Activated B cell treated with CpG ODN at 0.5 μM for 24 hours (primary cell): ENCODE measurements at regions of chr2 and their contacts with region 1.

Region 1: GRCh38 chr2:219278655-219279516 is at the start of gene DNAJB2:
- DNase-seq: peak; percentile 99
- ATAC-seq: peak; percentile 78
- H3K4me3 Mint-ChIP-seq: peak within 1 kb of the TSS; percentile 89
- H3K27ac Mint-ChIP-seq: peak within 1 kb of the TSS; percentile 97
- H3K4me1 Mint-ChIP-seq: peaks cover 49% of the 10 kb centered on the region
- H3K27me3 Mint-ChIP-seq: no peaks in the 10 kb centered on the region
- CTCF ChIP-seq: no peak
- total RNA-seq, gene DNAJB2: 59.0 and 71.1 TPM in 2 replicates

Region 2: GRCh38 chr2:218876562-218877219 is 402.2 kb before region 1 on chr2:
- CTCF ChIA-PET with region 1: no interaction called
- POLR2A ChIA-PET with region 1: interaction called, 4 read pairs
- intact Hi-C with region 1: loop called (anchors 1 kb)
- DNase-seq: peak; percentile 58
- ATAC-seq: no peak
- H3K4me3 Mint-ChIP-seq: no peak overlapping the region
- H3K27ac Mint-ChIP-seq: no peak overlapping the region
- H3K4me1 Mint-ChIP-seq: peaks cover 55% of the 10 kb centered on the region
- H3K27me3 Mint-ChIP-seq: peaks cover 19% of the 10 kb centered on the region
- CTCF ChIP-seq: peak; percentile 65

Region 3: DNA sequence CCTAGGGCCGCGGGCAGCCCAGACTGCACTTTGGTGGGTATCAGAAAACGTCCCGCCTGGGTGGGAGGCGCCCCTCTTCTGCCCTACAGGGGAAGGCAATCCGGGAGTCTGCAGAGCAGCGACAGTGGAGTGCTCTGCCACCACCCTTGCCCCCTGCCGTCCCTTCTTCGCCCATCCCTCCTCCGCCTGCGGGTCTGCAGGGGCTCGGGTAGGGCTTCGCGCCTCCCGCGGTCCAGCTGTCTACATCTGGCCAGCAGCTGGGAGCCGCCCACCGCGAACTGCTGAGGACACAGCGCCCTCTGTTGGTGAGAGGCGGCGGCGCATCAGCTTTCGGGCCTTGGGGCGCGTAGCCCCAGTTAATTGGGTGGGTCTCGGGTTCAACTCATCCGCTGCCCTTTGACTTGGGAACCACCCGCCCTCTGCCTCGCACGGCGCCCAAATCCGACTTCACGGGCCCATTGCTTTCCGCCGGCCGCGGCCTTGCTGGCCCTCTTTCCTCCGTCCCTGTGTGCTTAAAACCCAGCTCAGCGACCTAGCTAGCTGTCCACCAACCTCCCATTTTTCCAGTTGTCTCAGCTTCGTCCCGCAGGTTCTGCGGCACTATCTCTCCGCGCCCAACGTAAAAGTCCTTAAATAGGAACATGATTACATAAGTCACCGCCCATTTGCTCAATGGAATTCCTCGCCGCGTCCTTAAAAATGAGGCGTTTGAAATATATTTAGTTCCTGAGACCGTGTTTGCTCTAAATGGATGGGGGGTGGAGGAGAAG is 380.6 kb before region 1 on chr2:
- CTCF ChIA-PET with region 1: no interaction called
- POLR2A ChIA-PET with region 1: interaction called, 7 read pairs
- intact Hi-C with region 1: loop called (anchors 1 kb)
- DNase-seq: peak; percentile 88
- ATAC-seq: peak; percentile 22
- H3K4me3 Mint-ChIP-seq: peak overlapping the region; percentile 85
- H3K27ac Mint-ChIP-seq: peak overlapping the region; percentile 84
- H3K4me1 Mint-ChIP-seq: peaks cover 47% of the 10 kb centered on the region
- H3K27me3 Mint-ChIP-seq: peaks cover 22% of the 10 kb centered on the region
- CTCF ChIP-seq: peak; percentile 97

Region 4: DNA sequence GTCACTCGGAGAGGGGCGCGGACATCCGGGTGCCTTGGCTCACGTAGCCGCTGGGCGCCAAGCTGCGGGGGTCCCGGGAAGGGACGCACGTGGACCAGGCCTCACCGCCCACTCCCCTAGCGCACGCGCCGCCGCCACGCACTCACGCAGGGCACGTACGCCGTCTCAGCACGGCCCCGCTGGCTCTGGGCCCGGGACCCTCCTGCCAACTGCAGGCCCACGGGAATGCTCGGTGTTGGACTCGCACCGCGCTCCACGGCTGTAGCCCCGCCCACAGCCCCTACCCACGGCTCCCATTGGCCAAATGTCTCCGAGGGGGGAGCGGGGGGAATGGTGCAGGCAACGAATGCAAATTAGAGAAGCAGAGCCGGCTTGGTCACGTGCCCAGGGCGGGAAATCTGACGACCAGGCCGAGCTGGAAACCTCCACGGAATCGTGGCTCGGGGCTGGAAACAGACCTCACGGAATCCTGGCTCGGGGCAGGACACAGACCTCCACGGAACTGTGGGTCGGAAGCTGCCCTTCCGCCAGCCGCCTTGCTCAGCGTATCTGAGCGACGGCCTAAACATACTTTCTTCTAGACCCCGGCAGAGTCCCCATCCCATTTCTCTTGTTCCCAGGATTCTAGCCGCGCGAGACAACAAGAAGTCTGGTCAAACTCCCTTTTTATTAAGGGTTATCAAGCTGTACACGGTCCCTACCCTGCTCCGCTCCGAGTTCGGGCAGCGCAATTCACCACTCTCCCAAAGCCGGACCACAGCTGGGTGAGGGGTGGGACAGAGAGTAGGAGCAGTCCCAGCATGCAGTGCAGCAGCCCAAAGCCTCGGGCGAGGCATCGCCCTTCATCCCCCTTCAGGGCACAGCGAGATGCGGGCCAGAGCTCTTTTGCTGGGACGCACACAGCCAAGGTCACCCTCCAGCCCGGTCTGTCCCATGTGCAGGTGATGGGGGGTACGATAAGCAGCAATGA is 59.9 kb before region 1 on chr2 and contains the start of gene ABCB6:
- CTCF ChIA-PET with region 1: interaction called, 3 read pairs
- POLR2A ChIA-PET with region 1: interaction called, 30 read pairs
- intact Hi-C with region 1: loop called (anchors 1 kb)
- DNase-seq: peak; percentile 82
- ATAC-seq: peak; percentile 95
- H3K4me3 Mint-ChIP-seq: peak within 1 kb of the TSS; percentile 81
- H3K27ac Mint-ChIP-seq: peak within 1 kb of the TSS; percentile 74
- H3K4me1 Mint-ChIP-seq: peaks cover 19% of the 10 kb centered on the region
- H3K27me3 Mint-ChIP-seq: no peaks in the 10 kb centered on the region
- CTCF ChIP-seq: no peak
- total RNA-seq, gene ABCB6: 12.1 and 16.6 TPM in 2 replicates

Region 5: GRCh38 chr2:219245148-219245898 is 33.6 kb before region 1 on chr2 and contains the starts of genes GLB1L and STK16:
- CTCF ChIA-PET with region 1: interaction called, 35 read pairs
- POLR2A ChIA-PET with region 1: interaction called, 182 read pairs
- intact Hi-C with region 1: loop called (anchors 1 kb)
- DNase-seq: peak; percentile 95
- ATAC-seq: peak; percentile 64
- H3K4me3 Mint-ChIP-seq: peak within 1 kb of the TSS; percentile 90
- H3K27ac Mint-ChIP-seq: peak within 1 kb of the TSS; percentile 98
- H3K4me1 Mint-ChIP-seq: peaks cover 57% of the 10 kb centered on the region
- H3K27me3 Mint-ChIP-seq: no peaks in the 10 kb centered on the region
- CTCF ChIP-seq: no peak
- total RNA-seq, gene GLB1L: 4.5 and 4.6 TPM in 2 replicates
- total RNA-seq, gene STK16: 31.0 and 36.5 TPM in 2 replicates

Region 6: DNA sequence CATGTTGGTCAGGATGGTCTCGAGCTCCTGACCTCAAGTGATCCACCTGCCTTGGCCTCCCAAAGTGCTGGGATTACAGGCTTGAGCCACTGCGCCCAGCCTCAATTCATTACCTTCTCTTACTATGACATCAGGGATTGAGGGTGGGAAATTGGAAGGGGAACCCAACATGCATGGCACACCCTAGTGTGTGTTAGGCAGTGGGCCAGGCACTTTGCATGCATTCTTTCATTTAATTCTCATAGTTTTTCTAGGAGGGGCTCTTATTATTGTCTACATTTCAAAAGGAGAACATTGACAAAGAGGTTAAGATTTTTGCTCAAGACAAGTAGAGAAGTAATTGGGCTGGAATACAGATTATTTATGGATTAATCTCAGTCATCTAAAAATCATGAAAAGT is 10.6 kb before region 1 on chr2:
- CTCF ChIA-PET with region 1: no interaction called
- POLR2A ChIA-PET with region 1: no interaction called
- intact Hi-C with region 1: no loop called
- DNase-seq: no peak
- ATAC-seq: no peak
- H3K4me3 Mint-ChIP-seq: no peak overlapping the region
- H3K27ac Mint-ChIP-seq: no peak overlapping the region
- H3K4me1 Mint-ChIP-seq: no peaks in the 10 kb centered on the region
- H3K27me3 Mint-ChIP-seq: no peaks in the 10 kb centered on the region
- CTCF ChIP-seq: no peak

Region 7: GRCh38 chr2:219294356-219295351 is 15.8 kb after region 1 on chr2:
- CTCF ChIA-PET with region 1: interaction called, 155 read pairs
- POLR2A ChIA-PET with region 1: interaction called, 138 read pairs
- intact Hi-C with region 1: loop called (anchors 1 kb)
- DNase-seq: peak; percentile 91
- ATAC-seq: peak; percentile 95
- H3K4me3 Mint-ChIP-seq: peak overlapping the region; percentile 78
- H3K27ac Mint-ChIP-seq: peak overlapping the region; percentile 65
- H3K4me1 Mint-ChIP-seq: peaks cover 24% of the 10 kb centered on the region
- H3K27me3 Mint-ChIP-seq: peaks cover 6% of the 10 kb centered on the region
- CTCF ChIP-seq: peak; percentile 64